ENCODE measurements at regions of chr16 and their contacts with region 1.

Region 1: GRCh38 chr16:11586856-11587642 is at the start of gene LITAF:
- DNase-seq: peak; percentile 76
- H3K4me3 Mint-ChIP-seq: peak within 1 kb of the TSS; percentile 90
- H3K27ac Mint-ChIP-seq: peak within 1 kb of the TSS; percentile 91
- H3K4me1 Mint-ChIP-seq: peaks cover 30% of the 10 kb centered on the region
- H3K27me3 Mint-ChIP-seq: no peaks in the 10 kb centered on the region
- total RNA-seq, gene LITAF: 130 to 134 TPM

Region 2: DNA sequence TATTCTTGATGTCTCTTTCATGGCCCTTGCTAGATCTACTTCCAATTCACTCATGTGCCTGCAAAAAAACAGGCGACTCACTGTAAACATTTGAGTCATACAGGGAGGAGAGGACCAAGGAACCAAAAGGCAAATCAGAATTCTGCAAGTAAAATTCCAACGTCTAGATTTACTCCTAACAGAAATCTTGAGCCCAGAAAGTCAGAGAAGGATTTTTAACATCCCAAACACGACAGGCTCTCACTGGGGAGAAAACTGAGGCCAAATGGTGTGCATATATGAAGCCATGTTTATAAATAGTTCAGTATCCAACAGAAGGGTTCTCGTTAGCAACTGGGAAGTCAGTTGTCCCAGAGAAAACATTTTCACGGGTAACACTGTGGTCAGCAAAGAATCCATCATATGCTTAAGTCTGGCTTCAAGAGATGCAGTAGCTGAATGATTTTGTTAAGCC is 40.4 kb before region 1 on chr16:
- CTCF ChIA-PET with region 1: no interaction called
- POLR2A ChIA-PET with region 1: no interaction called
- intact Hi-C with region 1: loop called (anchors 5 kb)
- DNase-seq: no peak
- H3K4me3 Mint-ChIP-seq: no peak overlapping the region
- H3K27ac Mint-ChIP-seq: no peak overlapping the region
- H3K4me1 Mint-ChIP-seq: no peaks in the 10 kb centered on the region
- H3K27me3 Mint-ChIP-seq: no peaks in the 10 kb centered on the region

Region 3: DNA sequence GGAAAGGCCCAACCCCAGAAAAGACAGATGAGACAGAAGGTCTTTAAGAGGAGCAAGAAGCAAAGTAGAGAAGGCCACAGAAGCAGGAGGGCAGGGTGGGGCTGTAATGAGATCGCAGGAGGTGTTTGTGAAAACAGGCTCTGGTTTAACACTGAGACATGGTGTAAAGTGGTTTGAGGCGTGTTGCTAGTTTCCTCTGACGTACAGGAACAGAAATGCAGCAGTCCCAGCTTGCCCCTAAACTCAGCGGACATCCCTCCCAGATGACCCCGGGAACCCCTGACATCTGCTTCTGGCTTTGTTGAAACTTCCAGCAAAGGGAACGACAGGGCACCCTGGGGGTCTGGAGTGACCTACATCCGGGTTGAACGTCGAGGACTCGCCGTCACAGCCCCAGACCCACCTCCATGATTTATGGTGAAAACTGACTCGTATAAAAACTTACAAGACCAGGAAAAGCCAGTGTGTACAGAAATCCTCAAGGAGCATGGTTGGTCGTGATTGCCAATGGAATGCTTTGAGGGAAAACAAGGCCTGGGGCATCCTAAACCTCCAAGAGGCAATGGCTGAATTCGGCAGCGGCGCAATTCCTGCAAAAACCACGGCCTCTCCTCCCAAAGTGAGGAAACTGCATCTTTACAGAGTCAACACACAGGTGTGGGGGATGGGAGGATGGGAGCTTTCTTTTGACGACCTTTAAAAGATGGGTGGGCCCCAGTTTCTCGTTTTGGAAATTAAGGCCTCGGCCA is 26.2 kb before region 1 on chr16:
- CTCF ChIA-PET with region 1: interaction called, 4 read pairs
- POLR2A ChIA-PET with region 1: interaction called, 5 read pairs
- intact Hi-C with region 1: loop called (anchors 1 kb)
- DNase-seq: peak; percentile 77
- H3K4me3 Mint-ChIP-seq: peak overlapping the region; percentile 73
- H3K27ac Mint-ChIP-seq: peak overlapping the region; percentile 91
- H3K4me1 Mint-ChIP-seq: peaks cover 78% of the 10 kb centered on the region
- H3K27me3 Mint-ChIP-seq: no peaks in the 10 kb centered on the region

Region 4: DNA sequence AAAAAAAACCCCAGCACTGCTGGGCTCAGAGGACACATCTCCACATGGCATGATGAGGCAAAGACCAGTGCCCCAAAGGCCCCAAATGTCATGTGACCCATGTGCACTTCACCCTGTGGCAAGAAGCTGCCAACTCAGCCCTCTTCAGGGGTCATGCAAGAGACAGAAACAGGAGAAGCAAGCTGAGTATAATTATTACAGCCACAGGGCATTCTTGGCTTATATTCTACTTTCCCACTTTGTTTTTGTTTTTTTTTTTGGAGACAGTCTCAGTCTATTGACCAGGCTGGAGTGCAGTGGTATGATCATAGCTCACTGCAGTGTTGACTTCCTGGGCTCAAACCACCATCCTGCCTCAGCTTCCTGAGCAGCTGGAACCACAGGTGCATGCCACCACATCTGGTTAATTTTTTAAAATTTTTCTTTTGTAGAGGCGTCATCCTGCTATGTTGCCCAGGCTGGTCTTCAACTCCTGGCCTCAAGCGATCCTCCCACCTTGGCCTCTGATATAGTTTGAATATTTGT is 32.3 kb after region 1 on chr16:
- CTCF ChIA-PET with region 1: interaction called, 3 read pairs
- POLR2A ChIA-PET with region 1: interaction called, 3 read pairs
- intact Hi-C with region 1: loop called (anchors 1 kb)
- DNase-seq: peak; percentile 59
- H3K4me3 Mint-ChIP-seq: no peak overlapping the region
- H3K27ac Mint-ChIP-seq: peak overlapping the region; percentile 78
- H3K4me1 Mint-ChIP-seq: peaks cover 38% of the 10 kb centered on the region
- H3K27me3 Mint-ChIP-seq: no peaks in the 10 kb centered on the region

Region 5: GRCh38 chr16:11742539-11743307 is 155.7 kb after region 1 on chr16 and contains the start of gene TXNDC11:
- CTCF ChIA-PET with region 1: no interaction called
- POLR2A ChIA-PET with region 1: interaction called, 8 read pairs
- intact Hi-C with region 1: loop called (anchors 5 kb)
- DNase-seq: peak; percentile 99
- H3K4me3 Mint-ChIP-seq: peak within 1 kb of the TSS; percentile 89
- H3K27ac Mint-ChIP-seq: peak within 1 kb of the TSS; percentile 94
- H3K4me1 Mint-ChIP-seq: peaks cover 47% of the 10 kb centered on the region
- H3K27me3 Mint-ChIP-seq: no peaks in the 10 kb centered on the region
- total RNA-seq, gene TXNDC11: 28.4 to 29.9 TPM

Region 6: DNA sequence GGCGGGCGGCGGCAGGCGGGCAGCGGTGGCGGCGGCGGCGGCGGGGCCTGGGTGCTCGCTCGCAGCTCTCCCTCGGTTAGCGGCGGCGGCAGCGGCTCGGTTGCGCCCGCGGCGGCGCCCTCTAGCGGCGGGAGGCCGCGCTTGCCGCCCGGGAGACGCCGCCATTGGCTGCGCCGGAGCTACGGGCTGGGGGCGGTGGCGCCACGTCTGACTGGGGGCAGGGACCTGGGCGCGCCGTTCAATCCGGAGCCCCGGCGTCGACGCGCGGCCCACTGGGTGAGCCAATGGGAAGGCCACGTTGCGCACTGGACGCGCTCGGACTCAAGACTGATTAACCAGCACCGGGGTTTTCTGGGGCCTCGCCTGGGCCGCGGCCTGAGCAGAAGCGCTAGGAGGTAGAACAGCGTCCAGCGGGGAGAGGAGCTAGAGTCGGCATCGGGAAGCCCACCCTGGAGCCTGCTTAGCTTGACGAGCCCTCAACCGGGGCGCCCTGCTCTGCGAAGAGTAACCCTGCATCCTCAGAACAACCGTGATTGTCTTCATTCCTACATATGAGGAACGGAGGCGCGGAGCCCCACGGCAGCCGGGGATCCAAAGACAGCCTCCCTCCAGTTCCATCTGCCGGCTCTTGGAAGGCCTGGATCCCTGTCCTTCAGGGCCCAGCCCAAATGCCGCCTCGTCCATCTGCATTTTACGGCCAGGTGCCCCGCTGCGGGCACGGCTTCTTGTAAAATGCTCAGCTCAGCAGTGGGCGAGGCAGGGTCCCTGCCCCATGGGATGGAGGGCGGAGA is 210.3 kb after region 1 on chr16 and contains the start of gene ZC3H7A:
- CTCF ChIA-PET with region 1: interaction called, 6 read pairs
- POLR2A ChIA-PET with region 1: no interaction called
- intact Hi-C with region 1: loop called (anchors 5 kb)
- DNase-seq: peak; percentile 96
- H3K4me3 Mint-ChIP-seq: peak within 1 kb of the TSS; percentile 87
- H3K27ac Mint-ChIP-seq: peak within 1 kb of the TSS; percentile 91
- H3K4me1 Mint-ChIP-seq: peaks cover 64% of the 10 kb centered on the region
- H3K27me3 Mint-ChIP-seq: no peaks in the 10 kb centered on the region
- total RNA-seq, gene ZC3H7A: 65.1 to 75.5 TPM

Region 7: GRCh38 chr16:11851294-11852091 is 264.4 kb after region 1 on chr16 and contains the start of gene RSL1D1:
- CTCF ChIA-PET with region 1: no interaction called
- POLR2A ChIA-PET with region 1: no interaction called
- intact Hi-C with region 1: no loop called
- DNase-seq: peak; percentile 96
- H3K4me3 Mint-ChIP-seq: peak within 1 kb of the TSS; percentile 94
- H3K27ac Mint-ChIP-seq: peak within 1 kb of the TSS; percentile 89
- H3K4me1 Mint-ChIP-seq: peaks cover 52% of the 10 kb centered on the region
- H3K27me3 Mint-ChIP-seq: no peaks in the 10 kb centered on the region
- total RNA-seq, gene RSL1D1: 287 to 296 TPM

Region 8: GRCh38 chr16:12147681-12148080 is 560.6 kb after region 1 on chr16:
- CTCF ChIA-PET with region 1: no interaction called
- POLR2A ChIA-PET with region 1: no interaction called
- intact Hi-C with region 1: no loop called
- DNase-seq: no peak
- H3K4me3 Mint-ChIP-seq: no peak overlapping the region
- H3K27ac Mint-ChIP-seq: no peak overlapping the region
- H3K4me1 Mint-ChIP-seq: no peaks in the 10 kb centered on the region
- H3K27me3 Mint-ChIP-seq: no peaks in the 10 kb centered on the region

Measured in activated CD4-positive, alpha-beta memory T cell treated with anti-CD3 and anti-CD28 coated beads for 36 hours (primary cell).